Activated CD4-positive, alpha-beta memory T cell treated with anti-CD3 and anti-CD28 coated beads for 36 hours (primary cell): ENCODE measurements at regions of chr3 and their contacts with region 1.

Region 1: GRCh38 chr3:112327371-112327951 is 5.5 kb upstream of the CD200 start:
- DNase-seq: no peak
- H3K4me3 Mint-ChIP-seq: no peak overlapping the region
- H3K27ac Mint-ChIP-seq: no peak overlapping the region
- H3K4me1 Mint-ChIP-seq: peaks cover 5% of the 10 kb centered on the region
- H3K27me3 Mint-ChIP-seq: peaks cover 5% of the 10 kb centered on the region

Region 2: GRCh38 chr3:112379020-112379690 is 51.7 kb after region 1 on chr3:
- CTCF ChIA-PET with region 1: no interaction called
- POLR2A ChIA-PET with region 1: no interaction called
- intact Hi-C with region 1: no loop called
- DNase-seq: no peak
- H3K4me3 Mint-ChIP-seq: no peak overlapping the region
- H3K27ac Mint-ChIP-seq: no peak overlapping the region
- H3K4me1 Mint-ChIP-seq: peaks cover 28% of the 10 kb centered on the region
- H3K27me3 Mint-ChIP-seq: no peaks in the 10 kb centered on the region

Region 3: DNA sequence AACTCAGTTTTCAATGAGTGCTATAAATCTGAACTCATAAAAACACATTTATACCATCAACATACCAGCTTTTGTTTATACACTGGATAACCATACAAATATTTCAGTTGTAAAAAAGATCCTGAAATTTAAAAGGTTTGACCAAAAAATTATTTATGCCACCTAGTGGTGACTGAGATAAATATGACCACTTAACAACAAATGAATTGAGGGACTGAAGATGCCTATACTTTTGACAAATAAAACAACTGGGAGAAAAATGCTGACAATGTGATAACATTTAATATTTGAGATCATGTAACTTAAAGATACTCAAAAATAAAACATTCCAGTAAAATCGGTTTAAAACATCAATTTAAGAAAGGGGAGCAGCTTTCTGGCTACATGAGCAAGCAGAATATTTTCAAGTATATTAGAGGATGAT is 203.9 kb after region 1 on chr3:
- CTCF ChIA-PET with region 1: interaction called, 9 read pairs
- POLR2A ChIA-PET with region 1: no interaction called
- intact Hi-C with region 1: loop called (anchors 1 kb)
- DNase-seq: no peak
- H3K4me3 Mint-ChIP-seq: no peak overlapping the region
- H3K27ac Mint-ChIP-seq: no peak overlapping the region
- H3K4me1 Mint-ChIP-seq: peaks cover 7% of the 10 kb centered on the region
- H3K27me3 Mint-ChIP-seq: no peaks in the 10 kb centered on the region